ENCODE measurements at regions of chr3 and their contacts with region 1.

Region 1: GRCh38 chr3:49093853-49094767 is at the start of gene QRICH1:
- DNase-seq: peak; percentile 96
- ATAC-seq: peak; percentile 89
- H3K4me3 ChIP-seq: peak within 1 kb of the TSS; percentile 96 to 100 (median 99)
- H3K27ac ChIP-seq: peak within 1 kb of the TSS; percentile 98
- H3K4me1 ChIP-seq: peaks cover 29% of the 10 kb centered on the region
- H3K27me3 ChIP-seq: no peaks in the 10 kb centered on the region; a peak in 1 of 5 replicates
- CTCF ChIP-seq: peak; percentile 73
- EP300 ChIP-seq: no peak; a peak in 1 of 4 replicates
- POLR2A ChIP-seq: peak; percentile 67 to 86; a peak in 3 of 4 replicates
- RAD21 ChIP-seq: no peak; the same call in none of the 2 replicates
- total RNA-seq, gene QRICH1: 35.5 and 52.6 TPM in 2 replicates

Region 2: GRCh38 chr3:49007068-49007770 is 86.9 kb before region 1 on chr3 and contains the start of gene WDR6:
- CTCF ChIA-PET with region 1: no interaction called
- POLR2A ChIA-PET with region 1: interaction called, 42 read pairs
- in situ Hi-C with region 1: no loop called
- intact Hi-C with region 1: no loop called
- DNase-seq: peak; percentile 95
- ATAC-seq: peak; percentile 93
- H3K4me3 ChIP-seq: peak within 1 kb of the TSS; percentile 74 to 88 (median 78)
- H3K27ac ChIP-seq: peak within 1 kb of the TSS; percentile 86
- H3K4me1 ChIP-seq: peaks cover 58% of the 10 kb centered on the region
- H3K27me3 ChIP-seq: no peaks in the 10 kb centered on the region
- CTCF ChIP-seq: peak; percentile 76
- EP300 ChIP-seq: no peak
- POLR2A ChIP-seq: peak in 1 of 2 experiments; percentile 90; a peak in 2 of 4 replicates
- RAD21 ChIP-seq: no peak; the same call in 1 of the 2 replicates
- total RNA-seq, gene WDR6: 71.2 and 73.4 TPM in 2 replicates

Region 3: GRCh38 chr3:49028673-49029562 is 65.2 kb before region 1 on chr3 and contains the start of gene IMPDH2:
- CTCF ChIA-PET with region 1: no interaction called
- POLR2A ChIA-PET with region 1: interaction called, 40 read pairs
- in situ Hi-C with region 1: no loop called
- intact Hi-C with region 1: loop called (anchors 5 kb)
- DNase-seq: peak; percentile 82
- ATAC-seq: peak; percentile 86
- H3K4me3 ChIP-seq: peak within 1 kb of the TSS; percentile 56 to 78 (median 73)
- H3K27ac ChIP-seq: peak within 1 kb of the TSS; percentile 63
- H3K4me1 ChIP-seq: peaks cover 43% of the 10 kb centered on the region
- H3K27me3 ChIP-seq: no peaks in the 10 kb centered on the region
- CTCF ChIP-seq: peak; percentile 71
- EP300 ChIP-seq: peak in 1 of 2 experiments; percentile 42; a peak in 1 of 4 replicates
- POLR2A ChIP-seq: peak in 1 of 2 experiments; percentile 99; a peak in 2 of 4 replicates
- RAD21 ChIP-seq: peak; percentile 72
- total RNA-seq, gene IMPDH2: 260 and 344 TPM in 2 replicates

Region 4: GRCh38 chr3:49120438-49121131 is 26.5 kb after region 1 on chr3 and contains the start of gene USP19:
- CTCF ChIA-PET with region 1: no interaction called
- POLR2A ChIA-PET with region 1: interaction called, 61 read pairs
- in situ Hi-C with region 1: no loop called
- intact Hi-C with region 1: no loop called
- DNase-seq: peak; percentile 89
- ATAC-seq: peak; percentile 93
- H3K4me3 ChIP-seq: peak within 1 kb of the TSS; percentile 76 to 100 (median 95)
- H3K27ac ChIP-seq: peak within 1 kb of the TSS; percentile 84
- H3K4me1 ChIP-seq: peaks cover 19% of the 10 kb centered on the region
- H3K27me3 ChIP-seq: no peaks in the 10 kb centered on the region; a peak in 1 of 5 replicates
- CTCF ChIP-seq: peak; percentile 12; the same call in 1 of the 2 replicates
- EP300 ChIP-seq: 0 out of 4 replicates have a peak, but pooled peaks of 1 of the 2 experiments have one; percentile 11
- POLR2A ChIP-seq: peak in 1 of 2 experiments; percentile 88; a peak in 2 of 4 replicates
- RAD21 ChIP-seq: peak; percentile 68
- total RNA-seq, gene USP19: 31.7 and 33.8 TPM in 2 replicates

Region 5: DNA sequence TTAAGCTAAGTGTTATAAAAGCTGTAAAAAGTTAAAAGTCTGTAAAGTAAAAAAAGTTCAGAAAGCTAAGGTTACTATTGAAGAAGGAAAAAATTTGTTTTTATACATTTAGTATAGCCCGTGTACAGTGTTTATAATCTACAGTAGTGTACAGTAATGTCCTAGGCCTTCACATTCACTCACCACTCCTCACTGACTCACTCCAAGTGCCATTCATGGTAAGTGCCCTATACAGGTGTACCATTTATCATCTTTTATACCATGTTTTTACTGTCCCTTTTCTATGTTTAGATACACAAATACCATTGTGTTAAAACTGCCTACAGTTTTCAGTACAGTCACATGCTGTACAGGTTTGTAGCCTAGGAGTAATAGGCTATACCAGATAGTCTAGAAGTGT is 63.2 kb after region 1 on chr3:
- CTCF ChIA-PET with region 1: no interaction called
- POLR2A ChIA-PET with region 1: no interaction called
- in situ Hi-C with region 1: no loop called
- intact Hi-C with region 1: no loop called
- DNase-seq: no peak
- ATAC-seq: no peak
- H3K4me3 ChIP-seq: no peak overlapping the region
- H3K27ac ChIP-seq: no peak overlapping the region
- H3K4me1 ChIP-seq: peaks cover 14% of the 10 kb centered on the region
- H3K27me3 ChIP-seq: no peaks in the 10 kb centered on the region
- CTCF ChIP-seq: no peak
- EP300 ChIP-seq: no peak
- POLR2A ChIP-seq: no peak
- RAD21 ChIP-seq: no peak

Region 6: DNA sequence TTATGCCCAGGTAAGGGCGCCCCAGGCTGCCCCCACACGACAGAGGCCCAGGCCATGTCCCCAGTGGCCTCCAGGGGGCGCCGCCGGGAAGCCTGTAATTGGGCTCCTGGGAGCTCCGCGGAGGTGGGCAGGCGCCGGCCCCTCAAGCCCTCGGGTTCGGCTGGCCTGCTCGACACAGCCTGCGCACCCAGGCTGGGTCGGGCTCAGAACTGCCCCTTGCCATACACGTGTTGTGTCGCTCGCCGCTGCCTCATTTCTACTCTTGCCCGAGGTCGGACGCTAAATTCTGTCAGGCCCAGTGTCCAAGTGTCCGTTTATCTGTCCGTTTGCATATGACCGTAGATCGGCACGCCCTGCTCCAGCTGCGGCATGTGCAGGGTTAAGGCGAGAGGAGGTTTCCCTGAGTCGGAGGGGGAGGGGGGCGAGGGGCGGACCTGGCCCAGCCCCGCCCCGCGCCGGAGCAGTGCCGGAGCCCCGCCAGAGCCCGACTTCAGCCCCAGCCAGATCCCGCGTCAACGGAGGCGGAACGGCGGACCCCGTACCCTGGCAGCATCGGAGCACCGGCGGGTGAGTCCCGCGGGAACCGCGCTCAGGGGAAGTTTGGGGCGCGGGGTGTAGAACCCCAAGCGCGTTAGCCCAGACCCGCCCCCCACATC is 77.1 kb after region 1 on chr3 and contains the start of gene KLHDC8B:
- CTCF ChIA-PET with region 1: no interaction called
- POLR2A ChIA-PET with region 1: interaction called, 12 read pairs
- in situ Hi-C with region 1: no loop called
- intact Hi-C with region 1: no loop called
- DNase-seq: peak; percentile 82
- ATAC-seq: peak; percentile 82
- H3K4me3 ChIP-seq: peak within 1 kb of the TSS; percentile 80 to 89 (median 80)
- H3K27ac ChIP-seq: peak within 1 kb of the TSS; percentile 60
- H3K4me1 ChIP-seq: peaks cover 60% of the 10 kb centered on the region
- H3K27me3 ChIP-seq: no peaks in the 10 kb centered on the region; a peak in 1 of 5 replicates
- CTCF ChIP-seq: peak; percentile 93
- EP300 ChIP-seq: no peak
- POLR2A ChIP-seq: no peak
- RAD21 ChIP-seq: peak; percentile 90
- total RNA-seq, gene KLHDC8B: 17.2 and 17.7 TPM in 2 replicates

Region 7: DNA sequence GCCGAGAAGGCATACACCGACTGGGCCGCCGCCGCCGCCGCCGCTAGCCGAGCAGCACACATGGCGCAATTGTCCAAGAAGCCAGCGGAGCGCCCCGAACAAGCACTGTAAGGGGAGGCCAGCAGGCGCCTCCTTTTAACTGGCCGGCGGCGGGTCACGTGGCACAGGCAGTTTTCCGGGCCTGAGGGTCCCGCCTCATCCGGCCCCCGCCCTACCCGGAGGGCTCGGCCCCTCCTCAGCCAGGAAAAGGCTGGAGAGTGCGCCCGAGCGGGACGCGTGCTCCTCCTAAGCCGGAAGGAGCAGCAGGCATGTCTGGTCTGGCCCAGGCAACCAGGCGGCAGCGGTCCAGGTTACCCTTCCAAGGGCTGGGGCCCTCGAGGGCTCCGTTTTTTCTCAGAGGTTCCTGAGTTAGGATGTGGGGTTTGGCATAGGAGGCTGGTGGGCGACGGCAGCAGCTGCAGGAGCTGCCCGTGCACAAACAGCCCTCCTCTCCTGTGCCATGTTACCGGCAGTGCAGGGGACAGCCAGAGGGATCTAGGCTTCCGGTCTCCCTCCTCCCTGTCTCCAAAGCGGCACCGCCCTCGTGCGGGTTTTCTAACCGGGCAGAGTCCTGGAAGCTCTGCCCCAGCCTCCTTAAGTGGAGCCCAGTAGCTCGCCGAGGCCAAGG is 264.2 kb after region 1 on chr3 and contains the start of gene GPX1:
- CTCF ChIA-PET with region 1: no interaction called
- POLR2A ChIA-PET with region 1: interaction called, 19 read pairs
- in situ Hi-C with region 1: no loop called
- intact Hi-C with region 1: no loop called
- DNase-seq: peak; percentile 92
- ATAC-seq: peak; percentile 93
- H3K4me3 ChIP-seq: peak within 1 kb of the TSS; percentile 62 to 73 (median 63)
- H3K27ac ChIP-seq: peak within 1 kb of the TSS; percentile 94
- H3K4me1 ChIP-seq: peaks cover 37% of the 10 kb centered on the region
- H3K27me3 ChIP-seq: no peaks in the 10 kb centered on the region
- CTCF ChIP-seq: peak; percentile 32; the same call in 1 of the 2 replicates
- EP300 ChIP-seq: no peak
- POLR2A ChIP-seq: peak; percentile 86
- RAD21 ChIP-seq: peak; percentile 32; the same call in 1 of the 2 replicates
- total RNA-seq, gene GPX1: 149 and 169 TPM in 2 replicates

Region 8: GRCh38 chr3:49616491-49616941 is 522.4 kb after region 1 on chr3:
- CTCF ChIA-PET with region 1: no interaction called
- POLR2A ChIA-PET with region 1: no interaction called
- in situ Hi-C with region 1: no loop called
- intact Hi-C with region 1: no loop called
- DNase-seq: no peak
- ATAC-seq: no peak
- H3K4me3 ChIP-seq: no peak overlapping the region
- H3K27ac ChIP-seq: no peak overlapping the region
- H3K4me1 ChIP-seq: peaks cover 12% of the 10 kb centered on the region
- H3K27me3 ChIP-seq: no peaks in the 10 kb centered on the region
- CTCF ChIP-seq: no peak
- EP300 ChIP-seq: no peak
- POLR2A ChIP-seq: no peak
- RAD21 ChIP-seq: no peak

Measured in HepG2 (cell line).